ENCODE measurements at regions of chr16 and their contacts with region 1.

Region 1: DNA sequence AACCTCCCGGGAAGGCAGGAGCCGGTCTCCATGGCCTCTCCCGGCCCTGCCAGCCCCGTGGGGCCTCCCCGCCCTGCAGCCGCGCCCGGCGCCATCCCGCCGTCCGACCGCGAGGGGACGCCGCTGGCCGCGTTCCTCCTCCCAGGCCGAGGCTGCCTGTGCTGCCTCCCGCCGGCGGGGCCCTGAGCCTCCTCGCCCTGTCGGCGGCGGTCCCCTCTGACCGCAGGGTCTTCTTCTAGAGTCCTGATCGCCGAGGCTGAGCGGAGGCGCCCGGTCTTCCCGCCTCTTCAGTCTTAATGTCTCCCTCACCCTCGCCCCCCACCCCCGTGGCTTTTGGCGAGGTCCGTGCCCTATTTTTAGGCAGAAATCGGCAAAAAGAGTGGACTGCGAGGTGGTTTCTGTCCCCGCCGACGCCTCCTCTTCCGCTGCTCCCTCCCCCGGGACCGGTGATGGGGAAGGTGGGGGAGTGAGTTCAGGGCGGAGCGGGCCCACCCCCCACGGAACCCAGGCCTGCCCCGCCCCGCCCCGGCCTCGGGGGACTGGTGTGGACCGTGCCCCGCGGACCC is 794 bp upstream of the CPNE7 start:
- DNase-seq: peak; percentile 63
- H3K4me3 ChIP-seq: peak overlapping the region; percentile 20 to 27 (median 21)
- H3K27ac ChIP-seq: no peak overlapping the region
- H3K4me1 ChIP-seq: peaks cover 9% of the 10 kb centered on the region
- H3K27me3 ChIP-seq: peaks cover 0 to 1% of the 10 kb centered on the region in 2 experiments
- CTCF ChIP-seq: peak; percentile 83 to 89
- POLR2A ChIP-seq: no peak

Region 2: DNA sequence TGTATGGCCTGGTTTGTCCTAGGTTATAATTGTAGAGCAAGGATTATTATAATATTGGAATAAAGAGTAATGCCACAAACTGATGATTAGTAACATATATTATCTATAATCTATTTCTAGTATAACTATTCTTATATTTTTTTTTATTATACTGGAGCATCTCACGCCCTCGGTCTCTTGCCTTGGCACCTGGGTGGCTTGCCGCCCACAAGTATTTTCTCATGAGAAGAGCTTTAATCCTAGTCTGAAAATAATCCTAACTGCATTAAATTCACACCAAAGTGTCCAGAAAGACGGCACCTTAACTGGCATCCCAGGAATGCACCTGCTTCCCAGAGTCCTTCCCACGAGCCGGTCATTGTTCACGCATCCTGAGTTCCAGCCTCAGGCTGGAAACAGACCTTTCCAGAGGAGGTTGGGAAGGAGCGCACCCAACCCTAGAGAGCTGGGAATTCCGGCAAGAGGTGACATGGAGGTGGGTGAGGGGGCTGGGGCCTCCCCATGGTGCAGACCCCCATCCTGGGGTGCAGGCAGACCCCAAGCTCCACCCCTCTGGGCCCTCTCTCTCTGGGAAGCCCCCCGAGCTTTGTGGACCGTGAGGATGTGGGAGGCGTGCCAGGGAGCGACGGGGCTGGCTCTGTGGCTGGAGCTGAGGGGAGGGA is 66.8 kb after region 1 on chr16:
- CTCF ChIA-PET with region 1: interaction called, 6 read pairs
- POLR2A ChIA-PET with region 1: no interaction called
- dilution Hi-C with region 1: no loop called
- intact Hi-C with region 1: loop called (anchors 1 kb)
- DNase-seq: no peak
- H3K4me3 ChIP-seq: no peak overlapping the region
- H3K27ac ChIP-seq: no peak overlapping the region
- H3K4me1 ChIP-seq: no peaks in the 10 kb centered on the region
- H3K27me3 ChIP-seq: no peaks in the 10 kb centered on the region
- CTCF ChIP-seq: no peak
- POLR2A ChIP-seq: no peak

Region 3: DNA sequence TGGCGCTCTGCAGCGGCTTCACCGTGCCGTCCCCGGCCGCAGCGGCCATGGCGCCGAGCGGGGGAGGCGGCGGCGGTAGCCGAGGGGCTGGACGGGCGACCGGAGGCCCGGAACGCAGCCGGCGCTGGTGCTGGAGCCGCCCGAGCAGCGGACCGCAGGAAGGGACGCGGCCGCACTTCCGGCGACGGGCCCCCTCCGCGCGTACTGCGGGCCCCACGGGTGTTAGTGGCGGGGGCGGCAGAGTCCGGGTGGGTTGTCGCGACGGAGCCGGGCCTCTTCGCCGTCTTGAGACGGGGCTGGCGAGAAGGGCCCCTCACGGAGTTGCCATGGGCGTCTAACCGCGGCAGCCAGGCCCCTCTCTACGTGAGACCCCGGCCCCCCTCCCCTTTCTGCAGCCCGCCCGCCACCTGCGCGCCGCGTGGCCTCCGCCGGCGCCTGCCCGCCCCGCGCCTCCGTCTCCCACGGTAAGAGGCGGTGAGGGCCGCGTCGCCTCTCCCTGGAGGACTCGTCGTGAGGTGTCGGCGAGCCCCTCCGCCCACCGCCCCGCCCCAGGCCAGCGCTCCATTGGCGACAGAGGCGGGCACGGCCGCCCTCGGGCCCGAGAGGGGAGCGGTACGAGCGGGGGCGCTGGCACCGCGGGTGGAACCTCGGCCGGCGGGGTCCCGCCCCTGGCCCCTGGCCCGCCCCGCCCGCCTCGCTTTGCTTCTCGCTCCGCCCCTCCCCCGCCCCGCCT is 146.2 kb after region 1 on chr16 and contains the starts of genes VPS9D1 and ZNF276:
- CTCF ChIA-PET with region 1: no interaction called
- POLR2A ChIA-PET with region 1: no interaction called
- dilution Hi-C with region 1: no loop called
- intact Hi-C with region 1: loop called (anchors 10 kb)
- DNase-seq: peak; percentile 79
- H3K4me3 ChIP-seq: peak within 1 kb of the TSS; percentile 57 to 76 (median 63)
- H3K27ac ChIP-seq: peak within 1 kb of the TSS; percentile 95
- H3K4me1 ChIP-seq: peaks cover 36% of the 10 kb centered on the region
- H3K27me3 ChIP-seq: no peaks in the 10 kb centered on the region
- CTCF ChIP-seq: no peak
- POLR2A ChIP-seq: peak; percentile 80
- total RNA-seq, gene VPS9D1: 15.5 and 18.3 TPM in 2 replicates
- total RNA-seq, gene ZNF276: 36.6 and 42.7 TPM in 2 replicates